Activated naive CD4-positive, alpha-beta T cell treated with anti-CD3 and anti-CD28 coated beads, Interleukin-2, amount 10 ng/mL, durations not matched to agents 7 days and 5 days (primary cell): ENCODE measurements at regions of chr3 and their contacts with region 1.

Region 1: DNA sequence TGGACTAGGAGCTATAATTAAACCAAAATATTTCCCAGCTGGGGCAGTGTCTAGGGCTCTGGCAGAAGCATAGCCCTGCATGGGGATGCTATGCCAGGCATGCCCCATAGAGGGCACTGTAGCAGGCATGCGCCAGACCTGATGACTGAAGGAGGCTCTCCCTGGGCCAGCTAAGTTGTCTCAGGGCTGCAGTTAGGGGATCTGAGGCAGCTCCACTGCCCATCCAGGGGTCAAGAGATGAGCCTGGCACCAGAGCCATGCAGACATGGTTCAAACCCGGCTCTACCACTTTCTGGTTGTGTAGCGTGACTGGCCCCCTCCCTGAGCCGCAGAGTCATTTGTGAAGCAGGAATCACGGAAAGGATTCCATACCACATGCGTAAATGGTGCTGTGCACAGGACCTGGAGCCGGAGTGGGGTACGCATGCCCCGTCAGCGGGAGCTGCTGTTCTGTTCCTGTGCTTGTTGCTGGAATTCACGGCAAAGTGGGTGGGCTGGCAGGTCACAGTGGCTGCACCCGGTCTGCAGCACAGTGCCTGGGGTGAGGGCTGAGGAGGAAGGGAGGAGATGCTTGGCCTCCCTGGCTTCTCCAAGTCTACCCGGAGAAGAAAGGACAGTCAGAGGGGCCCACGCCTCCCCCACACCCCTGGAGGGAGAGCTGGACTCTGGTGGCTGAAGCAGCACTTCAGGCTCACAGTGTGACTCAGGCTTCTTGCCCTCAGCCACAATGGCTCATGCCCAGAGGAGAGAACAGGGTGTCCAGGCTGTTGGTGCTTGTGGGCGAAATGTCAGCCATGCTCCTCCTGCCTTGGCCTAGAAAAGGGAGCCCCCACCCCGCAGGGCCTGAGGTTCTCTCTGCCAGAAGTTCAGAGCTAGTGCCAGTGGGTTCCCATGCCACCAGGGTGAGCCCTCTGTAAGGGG is 43.1 kb downstream of the DNASE1L3 start:
- DNase-seq: peak; percentile 76
- H3K4me3 Mint-ChIP-seq: no peak overlapping the region
- H3K27ac Mint-ChIP-seq: no peak overlapping the region
- H3K4me1 Mint-ChIP-seq: no peaks in the 10 kb centered on the region
- H3K27me3 Mint-ChIP-seq: no peaks in the 10 kb centered on the region

Region 2: GRCh38 chr3:57815036-57815435 is 352.7 kb before region 1 on chr3:
- CTCF ChIA-PET with region 1: no interaction called
- DNase-seq: peak; percentile 56
- H3K4me3 Mint-ChIP-seq: no peak overlapping the region
- H3K27ac Mint-ChIP-seq: no peak overlapping the region
- H3K4me1 Mint-ChIP-seq: peaks cover 19% of the 10 kb centered on the region
- H3K27me3 Mint-ChIP-seq: no peaks in the 10 kb centered on the region

Region 3: DNA sequence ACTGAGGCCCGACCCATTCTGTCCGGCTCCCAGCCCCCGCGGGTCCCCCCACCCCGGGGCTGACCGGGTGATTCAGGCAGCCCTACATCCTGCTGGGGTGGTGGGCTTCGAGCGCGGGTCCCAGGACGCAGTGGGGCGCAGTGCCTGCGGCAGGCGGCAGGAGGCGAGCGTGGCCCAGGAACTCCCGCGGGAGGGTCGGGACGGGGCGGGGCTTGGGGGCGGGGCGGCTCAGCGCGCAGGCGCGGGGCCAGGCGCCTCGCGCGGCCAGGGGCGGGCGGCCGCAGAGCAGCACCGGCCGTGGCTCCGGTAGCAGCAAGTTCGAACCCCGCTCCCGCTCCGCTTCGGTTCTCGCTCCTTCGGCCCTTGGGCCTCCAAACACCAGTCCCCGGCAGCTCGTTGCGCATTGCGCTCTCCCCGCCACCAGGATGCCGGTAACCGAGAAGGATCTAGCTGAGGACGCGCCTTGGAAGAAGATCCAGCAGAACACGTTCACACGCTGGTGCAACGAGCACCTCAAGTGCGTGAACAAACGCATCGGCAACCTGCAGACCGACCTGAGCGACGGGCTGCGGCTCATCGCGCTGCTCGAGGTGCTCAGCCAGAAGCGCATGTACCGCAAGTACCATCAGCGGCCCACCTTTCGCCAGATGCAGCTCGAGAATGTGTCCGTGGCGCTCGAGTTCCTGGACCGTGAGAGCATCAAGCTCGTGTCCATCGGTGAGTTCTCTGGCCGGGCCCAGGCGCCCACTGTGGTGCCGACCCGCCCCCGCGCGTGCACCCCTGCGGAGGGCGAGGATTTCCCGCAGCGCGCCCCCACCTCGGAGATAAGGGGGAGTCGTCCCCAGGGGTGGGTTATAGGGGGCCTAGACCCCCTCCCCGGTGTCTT is 159.3 kb before region 1 on chr3 and contains the start of gene FLNB:
- CTCF ChIA-PET with region 1: interaction called, 33 read pairs
- DNase-seq: peak; percentile 81
- H3K4me3 Mint-ChIP-seq: peak within 1 kb of the TSS; percentile 82
- H3K27ac Mint-ChIP-seq: peak within 1 kb of the TSS; percentile 81
- H3K4me1 Mint-ChIP-seq: peaks cover 42% of the 10 kb centered on the region
- H3K27me3 Mint-ChIP-seq: no peaks in the 10 kb centered on the region

Region 4: GRCh38 chr3:58013973-58014649 is 153.6 kb before region 1 on chr3:
- CTCF ChIA-PET with region 1: interaction called, 33 read pairs
- DNase-seq: no peak
- H3K4me3 Mint-ChIP-seq: no peak overlapping the region
- H3K27ac Mint-ChIP-seq: no peak overlapping the region
- H3K4me1 Mint-ChIP-seq: peaks cover 48% of the 10 kb centered on the region
- H3K27me3 Mint-ChIP-seq: no peaks in the 10 kb centered on the region